ENCODE measurements at regions of chr1 and their contacts with region 1.

Region 1: DNA sequence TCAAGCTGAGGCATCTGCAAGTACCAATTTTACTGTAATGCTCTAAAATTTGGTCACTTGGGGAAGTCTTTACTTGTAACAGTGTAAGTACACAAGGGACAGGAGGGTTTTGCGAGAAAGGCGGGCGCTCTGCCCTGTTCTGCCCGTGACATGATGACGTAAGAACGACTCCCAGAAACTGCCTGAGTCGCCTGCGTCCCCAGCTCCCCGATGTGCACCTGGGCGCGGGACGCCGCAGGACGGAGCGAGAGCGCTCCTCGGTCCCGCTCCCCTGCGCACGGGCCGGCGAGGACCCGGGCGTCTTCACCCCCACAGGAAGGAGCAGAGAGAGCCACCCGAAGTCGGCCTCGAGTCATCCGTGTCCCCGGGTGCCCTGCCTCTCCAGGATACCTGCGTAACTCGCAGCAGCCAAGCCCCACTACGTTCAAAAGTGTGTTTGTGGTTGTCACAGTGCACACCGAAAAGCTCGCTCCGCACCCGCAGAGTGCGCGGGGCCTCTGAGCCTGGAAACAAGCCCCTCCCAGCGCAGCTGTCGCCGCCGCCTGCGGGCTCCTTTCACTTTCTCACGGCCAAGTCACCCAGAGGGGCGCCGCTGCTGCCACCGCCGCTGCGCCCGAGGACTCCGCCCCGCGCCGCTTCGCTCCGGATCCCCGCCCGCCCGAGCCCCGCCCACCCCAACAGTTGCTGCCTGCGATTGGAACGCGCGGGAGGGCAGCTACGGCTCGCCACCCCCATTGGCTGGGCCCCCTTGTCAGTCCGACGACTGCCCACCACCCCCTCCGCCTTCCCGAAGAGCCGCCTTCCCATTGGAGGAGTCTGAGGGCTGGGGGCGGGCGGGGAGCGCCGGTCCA is 3.2 kb upstream of the ZBTB18 start:
- DNase-seq: peak; percentile 99
- ATAC-seq: peak; percentile 76 to 81
- H3K4me3 ChIP-seq: peak overlapping the region; percentile 75 to 92 (median 81)
- H3K27ac ChIP-seq: peak overlapping the region; percentile 90 to 98 (median 96)
- H3K4me1 ChIP-seq: peaks cover 27 to 39% of the 10 kb centered on the region in 2 donors
- H3K27me3 ChIP-seq: no peaks in the 10 kb centered on the region
- CTCF ChIP-seq: peak in 1 of 5 experiments; percentile 13
- POLR2A ChIP-seq: peak; percentile 96 to 98

Region 2: DNA sequence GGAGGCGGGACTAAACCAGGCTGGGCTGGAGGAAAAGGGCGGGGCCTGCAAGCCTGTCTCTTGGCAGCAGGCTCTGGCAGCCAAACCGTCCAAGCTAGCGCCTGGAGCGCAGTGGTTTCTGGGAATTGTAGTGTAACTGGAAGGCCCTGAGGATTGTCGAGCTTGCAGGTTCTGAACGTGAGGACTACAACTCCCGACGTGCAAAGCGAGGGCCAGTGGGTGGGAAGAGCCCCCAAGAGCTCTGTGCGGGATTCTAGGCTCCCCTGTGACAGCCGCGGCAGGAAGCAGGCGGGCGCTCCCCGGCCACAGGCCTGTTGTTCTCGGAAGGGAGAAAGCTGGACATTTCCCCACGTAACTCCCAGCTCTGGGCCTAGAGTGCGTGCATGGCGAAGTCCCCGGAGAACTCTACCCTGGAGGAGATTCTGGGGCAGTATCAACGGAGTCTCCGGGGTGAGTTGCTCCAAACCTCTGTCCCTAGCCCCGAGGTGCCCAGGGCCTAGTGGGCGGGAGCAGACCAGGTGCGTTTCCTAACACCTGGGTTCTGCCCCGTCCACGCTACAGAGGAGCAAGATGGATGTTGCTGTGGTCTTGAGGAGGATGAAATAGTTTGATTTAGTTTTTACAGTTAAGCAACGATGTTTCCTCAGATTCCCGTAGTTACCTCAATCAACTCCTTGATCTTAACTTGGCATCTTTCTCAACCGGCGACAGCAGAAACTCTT is 791.9 kb before region 1 on chr1 and contains the start of gene SDCCAG8:
- in situ Hi-C with region 1: no loop called
- intact Hi-C with region 1: loop called (anchors 2 kb)
- DNase-seq: peak; percentile 99
- ATAC-seq: peak; percentile 86
- H3K4me3 ChIP-seq: peak within 1 kb of the TSS; percentile 78 to 95 (median 79)
- H3K27ac ChIP-seq: peak within 1 kb of the TSS; percentile 87 to 97 (median 96)
- H3K4me1 ChIP-seq: peaks cover 47 to 49% of the 10 kb centered on the region in 2 donors
- H3K27me3 ChIP-seq: no peaks in the 10 kb centered on the region
- CTCF ChIP-seq: no peak
- POLR2A ChIP-seq: peak; percentile 91 to 94
- total RNA-seq, gene SDCCAG8: 12.3 to 33.9 (median 26.1) TPM

Region 3: DNA sequence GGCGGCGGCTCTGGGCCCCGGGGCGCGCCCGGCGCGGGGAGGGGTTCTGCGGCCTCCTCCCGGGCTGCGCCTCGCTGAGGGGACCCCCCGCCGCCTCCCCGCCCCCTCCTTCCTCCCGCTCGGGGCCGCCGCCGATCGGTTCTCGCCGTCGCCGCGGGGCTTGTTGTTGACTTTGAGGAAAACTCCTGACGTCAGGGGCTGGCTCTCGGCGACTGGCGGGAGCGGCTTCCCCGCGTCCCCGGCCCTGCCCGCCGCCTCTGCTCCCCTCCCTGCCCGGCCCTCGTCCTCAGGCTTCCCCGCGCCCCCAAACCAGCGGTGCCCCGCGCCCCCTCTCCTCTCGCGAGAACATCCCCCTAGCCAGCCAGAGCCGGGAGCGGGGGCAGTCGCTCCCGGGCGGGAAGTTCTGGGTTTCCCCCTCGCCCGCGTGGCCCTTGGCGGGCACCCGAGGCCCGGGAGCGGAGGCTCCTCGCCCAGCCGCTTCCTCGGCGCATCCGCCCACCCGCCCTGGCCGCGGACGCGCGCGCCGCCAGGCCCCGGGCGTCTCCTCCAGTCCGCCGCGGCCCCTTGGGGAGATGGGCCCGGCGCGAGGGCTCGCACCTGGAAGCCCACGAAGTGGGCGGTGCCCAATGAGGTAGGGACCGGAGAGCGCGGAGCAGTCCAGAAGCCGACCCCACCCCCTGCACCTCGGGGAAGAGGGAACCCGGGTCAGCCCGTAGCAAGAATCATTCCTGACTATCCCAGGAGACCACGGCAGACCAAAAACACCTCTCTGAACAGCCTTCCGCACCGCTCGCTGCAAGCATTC is 197.2 kb before region 1 on chr1:
- in situ Hi-C with region 1: no loop called
- intact Hi-C with region 1: loop called (anchors 5 kb)
- DNase-seq: peak; percentile 15 to 50
- ATAC-seq: peak; percentile 59 to 65
- H3K4me3 ChIP-seq: peak overlapping the region; percentile 71 to 81 (median 78)
- H3K27ac ChIP-seq: peak overlapping the region; percentile 80 to 91 (median 88)
- H3K4me1 ChIP-seq: no peaks in the 10 kb centered on the region
- H3K27me3 ChIP-seq: peaks cover 0 to 34% (median 10%) of the 10 kb centered on the region in 3 donors
- CTCF ChIP-seq: no peak
- POLR2A ChIP-seq: peak; percentile 40 to 80

Region 4: GRCh38 chr1:244154872-244155531 is 107.2 kb after region 1 on chr1:
- in situ Hi-C with region 1: no loop called
- intact Hi-C with region 1: loop called (anchors 2 kb)
- DNase-seq: peak; percentile 56 to 84
- ATAC-seq: peak; percentile 96
- H3K4me3 ChIP-seq: peak overlapping the region; percentile 29 to 39 (median 35)
- H3K27ac ChIP-seq: peak overlapping the region; percentile 76 to 86 (median 78)
- H3K4me1 ChIP-seq: peaks cover 7 to 8% of the 10 kb centered on the region in 2 donors
- H3K27me3 ChIP-seq: no peaks in the 10 kb centered on the region
- CTCF ChIP-seq: peak in 4 of 5 experiments; percentile 22 to 44 (median 31)
- POLR2A ChIP-seq: peak; percentile 56 to 71

Region 5: GRCh38 chr1:244214009-244214967 is 166.4 kb after region 1 on chr1:
- in situ Hi-C with region 1: no loop called
- intact Hi-C with region 1: loop called (anchors 2 kb)
- DNase-seq: peak; percentile 79 to 84
- ATAC-seq: peak; percentile 90 to 96
- H3K4me3 ChIP-seq: peak overlapping the region in 2 of 4 donors; percentile 31 to 36
- H3K27ac ChIP-seq: peak overlapping the region; percentile 73 to 86 (median 77)
- H3K4me1 ChIP-seq: peaks cover 29 to 42% of the 10 kb centered on the region in 2 donors
- H3K27me3 ChIP-seq: no peaks in the 10 kb centered on the region
- CTCF ChIP-seq: no peak
- POLR2A ChIP-seq: peak in 1 of 2 donors; percentile 45

Region 6: DNA sequence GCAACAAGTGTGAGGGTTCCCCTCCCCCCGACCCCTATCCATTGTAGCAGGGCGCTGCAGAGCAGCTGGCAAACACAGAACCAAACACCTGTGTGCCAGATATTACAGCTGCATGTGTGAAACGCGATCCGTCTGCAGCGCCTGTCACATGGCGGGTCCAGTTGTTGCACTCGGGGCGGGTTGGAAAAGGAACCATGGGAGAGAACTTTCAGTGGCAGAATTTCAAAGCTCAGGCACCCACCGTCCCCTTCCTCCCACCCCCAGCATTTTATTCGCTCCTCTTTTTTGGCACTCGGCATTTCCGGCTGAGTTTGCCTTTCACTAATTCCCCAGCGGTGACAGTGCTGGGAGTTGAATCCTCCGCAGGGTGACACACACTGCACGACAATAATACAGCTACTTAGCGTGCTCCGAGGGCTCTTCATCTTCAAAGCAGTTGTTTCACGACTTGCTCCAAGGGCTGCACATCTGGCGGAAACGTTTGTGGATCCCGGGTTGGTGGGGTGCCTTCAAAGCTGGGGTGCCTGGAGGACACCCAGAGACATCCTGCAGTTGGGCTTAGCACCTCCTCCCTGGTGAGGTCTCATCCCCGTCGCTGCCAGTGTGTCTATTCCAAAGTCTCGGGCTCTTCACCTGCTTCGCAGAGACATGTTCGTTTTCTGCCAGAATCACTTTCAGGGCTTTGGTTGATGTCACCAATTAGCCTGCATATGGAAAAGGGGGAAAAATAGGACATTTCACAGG is 183.9 kb after region 1 on chr1:
- in situ Hi-C with region 1: loop called in 1 of 4 experiments (anchors 25 kb)
- intact Hi-C with region 1: loop called (anchors 5 kb)
- DNase-seq: peak; percentile 85 to 93
- ATAC-seq: peak; percentile 84 to 89
- H3K4me3 ChIP-seq: peak overlapping the region; percentile 38 to 56 (median 52)
- H3K27ac ChIP-seq: peak overlapping the region; percentile 85 to 94 (median 92)
- H3K4me1 ChIP-seq: peaks cover 15 to 23% of the 10 kb centered on the region in 2 donors
- H3K27me3 ChIP-seq: no peaks in the 10 kb centered on the region
- CTCF ChIP-seq: no peak
- POLR2A ChIP-seq: peak in 1 of 2 donors; percentile 30

Region 7: DNA sequence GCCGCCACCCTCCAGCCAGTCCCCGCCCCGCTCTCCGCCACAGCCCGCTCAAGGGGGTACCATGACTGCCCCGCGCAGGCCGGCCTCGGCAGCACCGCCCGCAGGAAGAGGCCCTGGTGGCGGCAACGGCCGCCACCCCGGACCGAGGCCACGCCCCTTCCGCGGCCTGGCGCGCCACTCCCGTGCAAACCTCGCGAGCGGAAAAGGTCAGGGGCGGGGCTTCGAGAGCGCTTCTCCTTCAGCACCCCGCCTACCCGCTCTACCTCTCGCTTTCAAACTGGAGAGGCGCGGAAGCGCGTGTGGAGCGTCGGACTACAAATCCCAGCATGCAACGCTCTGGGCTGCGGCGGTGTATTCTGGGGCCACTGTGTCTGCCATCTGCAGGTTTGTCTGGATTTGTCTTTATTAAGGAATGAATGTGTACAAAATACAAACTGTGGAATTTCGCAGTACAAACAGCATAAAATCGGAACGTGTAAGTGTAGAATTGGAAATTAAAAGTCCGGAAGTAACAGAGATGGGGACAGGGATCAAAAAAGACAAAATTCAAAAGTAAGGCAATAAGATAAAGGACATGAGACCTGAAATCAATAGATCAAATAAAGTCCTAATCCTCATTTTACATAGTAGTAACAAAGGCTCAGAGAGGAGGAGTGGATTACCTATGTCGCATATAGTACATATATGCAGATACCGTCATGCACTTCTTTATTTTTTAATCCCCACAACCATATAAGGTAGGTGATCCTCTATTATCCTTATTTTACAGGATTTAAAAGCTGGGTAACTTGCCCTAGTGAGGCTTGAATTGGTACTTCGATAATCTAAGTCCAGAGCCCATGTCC is 404.3 kb after region 1 on chr1:
- in situ Hi-C with region 1: no loop called
- intact Hi-C with region 1: loop called (anchors 5 kb)
- DNase-seq: peak; percentile 99
- ATAC-seq: peak; percentile 92 to 94
- H3K4me3 ChIP-seq: peak overlapping the region; percentile 89 to 99 (median 94)
- H3K27ac ChIP-seq: peak overlapping the region; percentile 96 to 99 (median 98)
- H3K4me1 ChIP-seq: peaks cover 28% of the 10 kb centered on the region in 2 donors
- H3K27me3 ChIP-seq: no peaks in the 10 kb centered on the region
- CTCF ChIP-seq: peak in 4 of 5 experiments; percentile 29 to 53 (median 46)
- POLR2A ChIP-seq: no peak